ENCODE measurements at regions of chr22 and their contacts with region 1.

Region 1: GRCh38 chr22:43014869-43015676 is at the start of gene PACSIN2:
- DNase-seq: peak; percentile 99 to 100
- H3K4me3 ChIP-seq: peak within 1 kb of the TSS; percentile 91 to 99
- H3K27ac ChIP-seq: peak within 1 kb of the TSS; percentile 41 to 75
- H3K4me1 ChIP-seq: peaks cover 3 to 6% of the 10 kb centered on the region in 2 donors
- H3K27me3 ChIP-seq: no peaks in the 10 kb centered on the region
- CTCF ChIP-seq: no peak
- total RNA-seq, gene PACSIN2: 95.5 TPM

Region 2: GRCh38 chr22:42868751-42869251 is 146.3 kb before region 1 on chr22:
- intact Hi-C with region 1: loop called (anchors 1 kb)
- DNase-seq: peak; percentile 49 to 82
- H3K4me3 ChIP-seq: peak overlapping the region in 1 of 2 donors; percentile 22
- H3K27ac ChIP-seq: peak overlapping the region; percentile 71 to 73
- H3K4me1 ChIP-seq: peaks cover 10 to 15% of the 10 kb centered on the region in 2 donors
- H3K27me3 ChIP-seq: no peaks in the 10 kb centered on the region
- CTCF ChIP-seq: no peak

Region 3: DNA sequence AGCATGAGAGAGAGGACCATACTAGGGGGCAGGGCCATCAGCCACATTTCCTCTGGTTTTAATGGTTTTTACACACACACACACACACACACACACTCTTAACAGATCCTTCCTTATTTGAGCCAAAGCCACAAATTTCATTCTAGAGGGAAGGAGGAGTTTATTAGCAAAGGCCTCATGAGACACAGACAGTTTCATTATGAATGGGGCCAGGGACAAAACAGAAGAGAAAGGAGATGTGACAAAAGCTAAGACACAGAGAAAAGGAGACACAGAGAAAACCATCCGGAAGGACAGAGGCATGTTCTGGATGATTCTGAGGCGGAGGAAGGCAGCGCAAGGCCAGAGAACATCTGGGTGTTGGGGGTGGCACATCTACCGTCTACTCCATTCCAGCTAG is 125.8 kb before region 1 on chr22:
- intact Hi-C with region 1: no loop called
- DNase-seq: no peak
- H3K4me3 ChIP-seq: no peak overlapping the region
- H3K27ac ChIP-seq: no peak overlapping the region
- H3K4me1 ChIP-seq: peaks cover 3 to 7% of the 10 kb centered on the region in 2 donors
- H3K27me3 ChIP-seq: no peaks in the 10 kb centered on the region
- CTCF ChIP-seq: no peak

Region 4: GRCh38 chr22:42906605-42907348 is 108.3 kb before region 1 on chr22:
- intact Hi-C with region 1: loop called (anchors 2 kb)
- DNase-seq: no peak
- H3K4me3 ChIP-seq: no peak overlapping the region
- H3K27ac ChIP-seq: peak overlapping the region; percentile 66 to 87
- H3K4me1 ChIP-seq: peaks cover 30 to 54% of the 10 kb centered on the region in 2 donors
- H3K27me3 ChIP-seq: no peaks in the 10 kb centered on the region
- CTCF ChIP-seq: no peak

Region 5: GRCh38 chr22:42920101-42920820 is 94.8 kb before region 1 on chr22:
- intact Hi-C with region 1: loop called (anchors 2 kb)
- DNase-seq: peak in 1 of 2 donors; percentile 84
- H3K4me3 ChIP-seq: no peak overlapping the region
- H3K27ac ChIP-seq: peak overlapping the region; percentile 67 to 82
- H3K4me1 ChIP-seq: peaks cover 11 to 47% of the 10 kb centered on the region in 2 donors
- H3K27me3 ChIP-seq: no peaks in the 10 kb centered on the region
- CTCF ChIP-seq: no peak

Region 6: GRCh38 chr22:42994881-42995562 is 20.1 kb before region 1 on chr22:
- intact Hi-C with region 1: loop called (anchors 2 kb)
- DNase-seq: peak in 1 of 2 donors; percentile 92
- H3K4me3 ChIP-seq: peak overlapping the region; percentile 51 to 64
- H3K27ac ChIP-seq: peak overlapping the region; percentile 93
- H3K4me1 ChIP-seq: peaks cover 38 to 86% of the 10 kb centered on the region in 2 donors
- H3K27me3 ChIP-seq: no peaks in the 10 kb centered on the region
- CTCF ChIP-seq: no peak